PC-9 (cell line): ENCODE measurements at regions of chr3 and their contacts with region 1.

Region 1: DNA sequence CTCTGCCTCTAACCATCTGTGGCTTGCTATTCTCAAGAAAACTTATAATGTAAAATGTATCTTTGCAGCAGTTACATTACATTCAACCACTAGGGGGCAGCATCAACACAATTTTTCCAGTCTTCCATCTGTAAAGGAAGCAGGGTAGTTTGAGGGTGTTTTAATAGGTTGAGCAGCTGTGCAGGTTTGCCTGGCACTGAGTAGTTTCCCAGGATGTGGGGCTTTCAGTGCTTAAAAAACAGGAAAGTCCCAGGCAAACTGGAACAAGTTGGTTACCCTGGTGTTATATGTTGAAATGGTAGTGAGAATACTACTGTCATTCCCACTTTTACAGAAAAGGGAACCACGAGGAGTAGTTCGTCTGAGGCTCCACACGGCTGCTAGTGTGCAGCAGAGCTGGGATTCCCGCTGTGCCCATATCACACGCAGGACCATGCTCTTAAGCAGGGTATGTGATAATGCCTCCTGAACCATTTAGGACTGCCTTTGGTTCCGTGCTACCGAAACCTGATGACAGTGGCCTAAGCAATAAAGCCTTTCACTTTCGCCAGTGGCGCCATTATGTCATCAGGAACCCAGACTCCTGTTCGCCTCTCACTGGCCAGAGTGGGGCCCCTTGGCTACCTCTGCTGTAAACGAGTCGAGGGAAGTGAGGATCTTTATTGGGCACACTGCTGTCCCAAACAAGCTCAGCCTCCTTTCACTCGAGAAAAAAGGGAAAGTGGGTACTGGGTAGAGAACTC is 64.7 kb upstream of the ZBTB38 start:
- DNase-seq: peak; percentile 56
- H3K4me3 ChIP-seq: no peak overlapping the region
- H3K27ac ChIP-seq: no peak overlapping the region
- H3K4me1 ChIP-seq: peaks cover 11% of the 10 kb centered on the region
- H3K27me3 ChIP-seq: no peaks in the 10 kb centered on the region
- CTCF ChIP-seq: peak; percentile 93

Region 2: GRCh38 chr3:141000027-141000663 is 303.5 kb before region 1 on chr3:
- CTCF ChIA-PET with region 1: no interaction called
- POLR2A ChIA-PET with region 1: no interaction called
- intact Hi-C with region 1: loop called (anchors 10 kb)
- DNase-seq: peak in 1 of 2 experiments; percentile 21
- H3K4me3 ChIP-seq: no peak overlapping the region
- H3K27ac ChIP-seq: no peak overlapping the region
- H3K4me1 ChIP-seq: no peaks in the 10 kb centered on the region
- H3K27me3 ChIP-seq: no peaks in the 10 kb centered on the region
- CTCF ChIP-seq: peak; percentile 64